ENCODE measurements at regions of chr1 and their contacts with region 1.

Region 1: GRCh38 chr1:25819576-25820246 is at the start of gene MTFR1L:
- DNase-seq: peak; percentile 86 to 91 (median 88)
- H3K4me3 ChIP-seq: peak within 1 kb of the TSS; percentile 99
- H3K27ac ChIP-seq: peak within 1 kb of the TSS; percentile 74 to 86
- H3K4me1 ChIP-seq: peaks cover 14% of the 10 kb centered on the region
- H3K27me3 ChIP-seq: no peaks in the 10 kb centered on the region
- CTCF ChIP-seq: no peak
- EP300 ChIP-seq: no peak
- POLR2A ChIP-seq: peak; percentile 90
- total RNA-seq, gene MTFR1L: 55.5 to 113 (median 97.4) TPM

Region 2: GRCh38 chr1:25338188-25338981 is 481.3 kb before region 1 on chr1 and contains the start of gene TMEM50A:
- intact Hi-C with region 1: no loop called
- DNase-seq: peak; percentile 88 to 94 (median 92)
- H3K4me3 ChIP-seq: peak within 1 kb of the TSS; percentile 73
- H3K27ac ChIP-seq: peak within 1 kb of the TSS; percentile 3 to 80
- H3K4me1 ChIP-seq: peaks cover 3% of the 10 kb centered on the region
- H3K27me3 ChIP-seq: no peaks in the 10 kb centered on the region
- CTCF ChIP-seq: no peak
- EP300 ChIP-seq: no peak
- POLR2A ChIP-seq: peak; percentile 41
- total RNA-seq, gene TMEM50A: 50.0 to 74.9 (median 53.9) TPM

Region 3: DNA sequence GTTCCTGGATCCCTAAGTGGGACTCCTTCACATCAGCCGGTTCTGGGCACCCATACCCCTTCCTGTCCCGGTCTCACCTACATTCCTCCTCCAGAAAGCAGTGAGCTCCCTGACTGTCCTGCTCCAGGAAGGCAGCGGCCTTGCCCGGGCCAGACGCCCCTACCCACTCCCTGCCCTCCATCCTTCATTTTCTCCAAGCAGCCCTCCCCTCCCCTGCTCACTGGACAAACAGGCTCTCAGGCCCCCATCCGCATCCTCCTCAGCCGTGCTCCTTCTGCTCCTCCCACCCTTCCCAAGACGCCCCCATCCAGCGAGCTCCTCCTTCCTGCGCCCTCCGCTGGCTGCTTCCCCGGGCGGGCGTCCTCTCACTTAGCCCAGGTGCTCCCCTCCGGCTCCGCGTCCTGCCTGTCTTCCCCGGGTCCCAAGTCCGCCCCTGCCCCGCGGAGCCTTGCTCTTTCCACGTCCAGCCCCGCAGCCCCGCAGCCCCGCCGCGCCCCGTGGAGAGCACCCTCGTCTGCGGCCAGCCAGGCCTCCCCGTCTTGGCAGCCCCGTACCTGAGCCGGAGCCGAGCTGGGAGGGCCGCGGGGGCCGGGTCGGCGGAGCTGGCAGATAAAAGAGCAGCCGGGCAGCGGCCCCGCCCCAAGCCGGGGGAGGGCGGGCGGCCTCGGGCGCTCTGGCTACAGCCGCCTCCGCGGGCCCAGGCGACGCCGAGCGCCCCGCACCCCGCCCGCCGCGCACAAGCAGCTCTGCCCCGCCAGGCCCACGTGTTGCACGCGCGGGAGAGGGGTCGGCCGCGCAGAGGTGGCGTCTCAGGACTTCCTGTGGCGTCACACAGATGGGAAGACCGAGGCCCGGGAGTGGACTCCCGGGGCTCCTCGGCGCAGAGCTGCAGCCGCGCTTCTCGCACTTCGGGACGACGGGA is 55.5 kb after region 1 on chr1 and contains the start of gene PAQR7:
- intact Hi-C with region 1: loop called in 2 of 4 experiments (anchors 10 kb)
- DNase-seq: peak; percentile 81 to 88 (median 86)
- H3K4me3 ChIP-seq: peak within 1 kb of the TSS; percentile 56
- H3K27ac ChIP-seq: peak within 1 kb of the TSS; percentile 91 to 97
- H3K4me1 ChIP-seq: peaks cover 44% of the 10 kb centered on the region
- H3K27me3 ChIP-seq: no peaks in the 10 kb centered on the region
- CTCF ChIP-seq: no peak
- EP300 ChIP-seq: no peak
- POLR2A ChIP-seq: peak; percentile 71
- total RNA-seq, gene PAQR7: 8.6 to 98.1 (median 72.2) TPM

Region 4: DNA sequence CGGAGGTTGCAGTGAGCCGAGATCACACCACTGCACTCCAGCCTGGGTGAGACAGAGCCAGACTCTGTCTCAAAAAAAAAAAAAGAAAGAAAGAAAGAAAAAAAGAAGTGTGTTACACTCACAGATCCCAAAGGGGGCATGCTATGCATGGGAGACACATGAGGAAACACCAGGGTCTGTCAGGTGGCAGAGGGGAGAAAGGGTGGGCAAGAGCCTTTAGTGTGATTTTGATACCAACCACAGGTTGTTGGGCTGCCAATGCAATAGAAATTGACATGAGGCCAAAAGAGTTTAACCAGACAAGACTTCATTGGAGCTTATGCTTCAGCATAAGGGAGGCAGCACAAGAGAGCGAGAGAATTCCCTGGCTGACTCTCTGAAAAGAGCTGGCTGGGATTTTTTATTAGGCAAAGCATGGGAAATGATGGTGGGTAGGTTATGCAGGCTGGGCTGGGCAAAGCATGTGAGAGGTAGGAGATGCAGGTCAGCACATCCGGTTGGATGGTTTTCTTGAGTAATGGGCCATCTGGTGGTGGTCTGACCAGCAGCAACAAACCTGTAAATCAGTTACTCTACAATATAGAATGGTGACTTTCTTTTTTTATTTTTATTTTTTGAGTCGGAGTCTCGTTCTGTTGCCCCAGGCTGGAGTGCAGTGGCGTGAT is 190.2 kb after region 1 on chr1:
- intact Hi-C with region 1: loop called in 1 of 4 experiments (anchors 10 kb)
- DNase-seq: no peak
- H3K4me3 ChIP-seq: no peak overlapping the region
- H3K27ac ChIP-seq: no peak overlapping the region
- H3K4me1 ChIP-seq: no peaks in the 10 kb centered on the region
- H3K27me3 ChIP-seq: no peaks in the 10 kb centered on the region
- CTCF ChIP-seq: no peak
- EP300 ChIP-seq: no peak
- POLR2A ChIP-seq: no peak

Measured in ovary (tissue), 10 donors.